ENCODE measurements at regions of chr17 and their contacts with region 1.

Region 1: GRCh38 chr17:29568331-29569244 is at the start of gene TP53I13:
- DNase-seq: peak; percentile 78 to 86 (median 83)
- H3K4me3 ChIP-seq: peak within 1 kb of the TSS; percentile 58 to 83
- H3K4me3 Mint-ChIP-seq: peak within 1 kb of the TSS; percentile 92 to 98 (median 96)
- H3K27ac ChIP-seq: peak within 1 kb of the TSS; percentile 61
- H3K27ac Mint-ChIP-seq: peak within 1 kb of the TSS; percentile 92 to 98 (median 95)
- H3K4me1 ChIP-seq: peaks cover 31% of the 10 kb centered on the region
- H3K4me1 Mint-ChIP-seq: peaks cover 23 to 55% (median 34%) of the 10 kb centered on the region in 4 donors
- H3K27me3 ChIP-seq: no peaks in the 10 kb centered on the region
- H3K27me3 Mint-ChIP-seq: no peaks in the 10 kb centered on the region
- total RNA-seq, gene TP53I13: 149 to 158 TPM

Region 2: GRCh38 chr17:29389982-29390850 is 178.4 kb before region 1 on chr17 and contains the start of gene TAOK1:
- CTCF ChIA-PET with region 1: no interaction called
- POLR2A ChIA-PET with region 1: interaction called, 18 read pairs
- intact Hi-C with region 1: loop called (anchors 1 kb)
- DNase-seq: peak; percentile 96 to 98 (median 97)
- H3K4me3 ChIP-seq: peak within 1 kb of the TSS; percentile 89 to 98
- H3K4me3 Mint-ChIP-seq: peak within 1 kb of the TSS; percentile 94 to 99 (median 96)
- H3K27ac ChIP-seq: peak within 1 kb of the TSS; percentile 93
- H3K27ac Mint-ChIP-seq: peak within 1 kb of the TSS; percentile 94 to 98 (median 97)
- H3K4me1 ChIP-seq: peaks cover 45% of the 10 kb centered on the region
- H3K4me1 Mint-ChIP-seq: peaks cover 31 to 50% (median 40%) of the 10 kb centered on the region in 4 donors
- H3K27me3 ChIP-seq: no peaks in the 10 kb centered on the region
- H3K27me3 Mint-ChIP-seq: no peaks in the 10 kb centered on the region
- total RNA-seq, gene TAOK1: 71.2 to 72.0 TPM

Region 3: DNA sequence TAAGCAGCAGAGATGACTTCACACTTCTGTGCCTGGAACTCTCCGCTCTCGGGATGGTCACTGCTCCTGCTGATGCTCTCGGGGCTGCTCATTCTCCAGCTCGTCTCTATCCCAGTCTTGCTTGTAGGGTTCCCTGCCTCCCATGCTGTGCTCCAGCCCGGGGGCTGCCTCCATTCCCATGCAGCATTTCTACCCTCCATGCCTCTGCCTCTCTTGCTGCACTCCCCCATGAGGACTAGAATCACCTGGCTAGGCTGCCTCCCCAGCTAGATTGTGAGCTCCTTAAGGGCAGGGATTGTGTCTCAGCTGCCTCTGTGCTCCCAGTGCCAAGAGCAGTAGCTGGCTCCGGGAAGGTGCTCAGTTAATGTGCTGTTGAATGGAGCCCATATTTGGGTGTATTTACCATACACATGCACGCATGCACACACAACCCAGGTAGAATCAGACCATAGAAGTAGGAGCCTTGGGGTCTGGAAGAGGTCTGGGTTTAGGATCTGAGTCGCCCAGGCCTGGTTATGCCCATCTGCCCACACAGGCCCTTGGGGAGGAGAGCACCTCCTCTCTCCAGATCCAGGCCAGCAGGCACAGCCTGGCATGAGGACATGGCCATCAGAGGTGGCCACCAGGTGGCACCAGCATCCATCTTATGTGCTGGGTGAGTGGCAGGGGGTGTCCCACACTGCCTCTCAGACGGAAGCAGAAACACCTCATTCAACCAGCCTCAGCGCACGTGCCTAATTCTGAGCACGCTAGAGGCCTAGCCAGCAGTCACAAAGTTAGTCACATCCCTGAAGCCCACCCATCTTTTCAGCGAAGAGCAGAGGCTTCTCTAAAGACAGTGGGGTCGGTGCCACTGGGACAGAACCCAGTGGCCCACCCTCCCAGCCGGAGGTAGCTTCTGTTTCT is 11.5 kb after region 1 on chr17:
- CTCF ChIA-PET with region 1: interaction called, 34 read pairs
- POLR2A ChIA-PET with region 1: interaction called, 115 read pairs
- intact Hi-C with region 1: loop called (anchors 1 kb)
- DNase-seq: peak; percentile 85 to 91 (median 87)
- H3K4me3 ChIP-seq: no peak overlapping the region
- H3K4me3 Mint-ChIP-seq: peak overlapping the region in 2 of 8 donors; percentile 8 to 65
- H3K27ac ChIP-seq: no peak overlapping the region
- H3K27ac Mint-ChIP-seq: peak overlapping the region; percentile 55 to 90 (median 83)
- H3K4me1 ChIP-seq: peaks cover 18% of the 10 kb centered on the region
- H3K4me1 Mint-ChIP-seq: peaks cover 8 to 31% (median 18%) of the 10 kb centered on the region in 4 donors
- H3K27me3 ChIP-seq: no peaks in the 10 kb centered on the region
- H3K27me3 Mint-ChIP-seq: no peaks in the 10 kb centered on the region

Region 4: DNA sequence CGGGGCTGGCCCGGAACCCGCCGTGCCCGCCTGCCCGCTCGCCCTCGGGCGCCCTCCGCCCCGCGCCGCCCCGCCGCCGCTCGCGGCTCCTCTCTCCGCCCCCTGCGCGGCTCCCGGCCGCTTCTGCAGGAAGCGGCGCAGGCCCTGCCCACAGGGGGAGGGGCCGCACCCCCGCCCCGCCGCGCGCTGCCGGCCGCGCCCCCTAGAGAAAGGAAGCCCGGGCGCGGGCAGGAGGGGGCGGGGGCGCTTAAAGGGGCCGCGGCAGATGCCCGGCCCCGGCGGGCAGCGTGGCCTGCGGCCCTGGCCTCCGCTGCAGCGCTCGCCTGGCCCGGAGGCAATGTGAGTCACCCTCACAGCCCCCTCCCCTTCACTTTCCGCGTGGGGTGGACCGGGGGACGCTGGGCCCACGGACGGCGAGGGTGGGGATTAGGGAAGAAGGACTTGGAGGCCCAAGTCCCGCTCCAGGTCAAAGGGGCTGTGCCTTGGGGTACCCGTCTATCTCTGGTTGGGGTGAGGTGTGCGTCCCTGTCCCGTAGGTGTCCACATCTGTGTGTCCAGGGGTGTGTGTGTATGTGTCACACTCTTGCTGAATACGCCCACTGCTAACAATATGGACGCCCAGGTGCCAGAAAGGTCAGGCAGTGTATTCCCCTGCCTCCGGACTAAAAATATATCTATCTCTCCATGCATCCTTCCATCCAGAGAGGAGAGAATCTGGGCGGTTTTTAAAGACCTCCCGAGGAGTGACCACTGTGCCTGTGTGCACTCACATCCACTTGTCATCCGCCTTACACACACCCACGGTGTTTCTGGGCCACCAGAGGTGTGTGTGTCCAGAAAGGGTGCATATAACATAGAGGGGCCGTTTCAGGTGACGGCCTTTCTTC is 21.2 kb after region 1 on chr17 and contains the start of gene GIT1:
- CTCF ChIA-PET with region 1: interaction called, 36 read pairs
- POLR2A ChIA-PET with region 1: interaction called, 115 read pairs
- intact Hi-C with region 1: loop called (anchors 1 kb)
- DNase-seq: peak; percentile 81 to 86 (median 85)
- H3K4me3 ChIP-seq: peak within 1 kb of the TSS; percentile 61 to 82
- H3K4me3 Mint-ChIP-seq: peak within 1 kb of the TSS; percentile 93 to 97 (median 95)
- H3K27ac ChIP-seq: peak within 1 kb of the TSS; percentile 70
- H3K27ac Mint-ChIP-seq: peak within 1 kb of the TSS; percentile 86 to 97 (median 92)
- H3K4me1 ChIP-seq: peaks cover 82% of the 10 kb centered on the region
- H3K4me1 Mint-ChIP-seq: peaks cover 30 to 71% (median 53%) of the 10 kb centered on the region in 4 donors
- H3K27me3 ChIP-seq: no peaks in the 10 kb centered on the region
- H3K27me3 Mint-ChIP-seq: no peaks in the 10 kb centered on the region
- total RNA-seq, gene GIT1: 78.9 to 82.8 TPM

Region 5: GRCh38 chr17:29687596-29687995 is 119.0 kb after region 1 on chr17:
- CTCF ChIA-PET with region 1: no interaction called
- POLR2A ChIA-PET with region 1: no interaction called
- intact Hi-C with region 1: no loop called
- DNase-seq: no peak
- H3K4me3 ChIP-seq: no peak overlapping the region
- H3K4me3 Mint-ChIP-seq: no peak overlapping the region
- H3K27ac ChIP-seq: no peak overlapping the region
- H3K27ac Mint-ChIP-seq: peak overlapping the region in 3 of 7 donors; percentile 10 to 89 (median 16)
- H3K4me1 ChIP-seq: peaks cover 7% of the 10 kb centered on the region
- H3K4me1 Mint-ChIP-seq: peaks cover 9 to 15% (median 11%) of the 10 kb centered on the region in 4 donors
- H3K27me3 ChIP-seq: no peaks in the 10 kb centered on the region
- H3K27me3 Mint-ChIP-seq: no peaks in the 10 kb centered on the region

Region 6: GRCh38 chr17:29705386-29705785 is 136.8 kb after region 1 on chr17:
- CTCF ChIA-PET with region 1: no interaction called
- POLR2A ChIA-PET with region 1: interaction called, 17 read pairs
- intact Hi-C with region 1: no loop called
- DNase-seq: peak in 4 of 5 donors; percentile 26 to 39 (median 28)
- H3K4me3 ChIP-seq: peak overlapping the region in 1 of 2 donors; percentile 16
- H3K4me3 Mint-ChIP-seq: peak overlapping the region; percentile 58 to 87 (median 76)
- H3K27ac ChIP-seq: peak overlapping the region; percentile 68
- H3K27ac Mint-ChIP-seq: peak overlapping the region; percentile 91 to 100 (median 98)
- H3K4me1 ChIP-seq: peaks cover 54% of the 10 kb centered on the region
- H3K4me1 Mint-ChIP-seq: peaks cover 30 to 61% (median 41%) of the 10 kb centered on the region in 4 donors
- H3K27me3 ChIP-seq: no peaks in the 10 kb centered on the region
- H3K27me3 Mint-ChIP-seq: no peaks in the 10 kb centered on the region

Measured in CD4-positive, alpha-beta memory T cell (primary cell).